Left lung (tissue), 14 donors: ENCODE measurements at regions of chrX and their contacts with region 1.

Region 1: DNA sequence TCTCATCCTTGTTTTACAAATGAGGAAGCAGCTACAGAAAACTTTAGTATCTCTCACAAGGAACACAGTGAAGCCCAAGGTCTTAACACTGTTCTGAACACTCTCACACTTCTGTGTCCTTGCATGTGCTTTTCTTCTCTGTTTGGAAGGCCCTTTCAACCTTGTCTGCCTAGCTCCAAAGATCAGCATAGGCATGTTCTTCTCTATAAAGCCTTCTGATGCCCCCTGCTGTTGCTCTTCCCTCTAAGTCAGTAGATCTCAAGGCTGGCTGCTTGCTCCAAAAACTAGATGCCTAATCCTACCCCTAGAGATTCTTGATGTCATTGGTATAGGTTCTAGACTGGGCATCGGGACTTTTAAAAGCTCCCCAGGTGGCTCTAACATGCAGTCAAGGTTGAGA is 5.9 kb downstream of the APOO start:
- DNase-seq: peak in 1 of 4 donors; percentile 80
- ATAC-seq: peak; percentile 94
- H3K4me3 ChIP-seq: no peak overlapping the region
- H3K27ac ChIP-seq: peak overlapping the region; percentile 26 to 80
- H3K4me1 ChIP-seq: peaks cover 5 to 26% of the 10 kb centered on the region in 2 donors
- H3K27me3 ChIP-seq: no peaks in the 10 kb centered on the region
- CTCF ChIP-seq: peak; percentile 10 to 22

Region 2: GRCh38 chrX:23782863-23783568 is 118.8 kb before region 1 on chrX and contains the start of gene SAT1:
- intact Hi-C with region 1: loop called in 1 of 2 experiments (anchors 5 kb)
- DNase-seq: peak; percentile 87 to 96 (median 96)
- ATAC-seq: peak; percentile 90
- H3K4me3 ChIP-seq: peak within 1 kb of the TSS; percentile 47 to 59
- H3K27ac ChIP-seq: peak within 1 kb of the TSS; percentile 93 to 96
- H3K4me1 ChIP-seq: peaks cover 0 to 17% of the 10 kb centered on the region in 2 donors
- H3K27me3 ChIP-seq: no peaks in the 10 kb centered on the region
- CTCF ChIP-seq: peak; percentile 55 to 82
- polyA plus RNA-seq, gene SAT1: 266 to 434 (median 355) TPM